Activated CD8-positive, alpha-beta T cell treated with anti-CD3 and anti-CD28 coated beads, Interleukin-2, amount 10 ng/mL, durations not matched to agents 7 days and 5 days (primary cell): ENCODE measurements at regions of chr7 and their contacts with region 1.

Region 1: DNA sequence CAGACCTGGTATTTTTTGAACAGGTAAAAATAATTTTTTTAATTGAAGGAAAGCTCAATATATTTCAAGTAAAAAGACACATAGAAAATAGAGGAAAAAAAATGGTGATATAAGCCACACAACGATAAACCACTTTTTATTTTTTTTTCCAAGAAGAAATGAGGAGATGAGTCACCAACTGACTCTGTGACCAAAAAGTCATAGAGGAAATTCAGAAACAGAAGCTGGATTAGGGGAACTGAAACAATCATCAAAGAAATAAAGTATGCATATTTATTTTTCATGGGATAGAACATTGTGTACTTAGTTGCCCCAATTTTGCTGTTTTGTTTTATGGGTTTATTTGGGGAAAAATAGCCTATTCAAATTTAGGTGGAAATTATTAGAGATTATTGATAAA is 176.8 kb upstream of the AGR3 start:
- DNase-seq: no peak
- ATAC-seq: peak; percentile 44
- H3K4me3 Mint-ChIP-seq: no peak overlapping the region
- H3K27ac Mint-ChIP-seq: no peak overlapping the region
- H3K4me1 Mint-ChIP-seq: peaks cover 36% of the 10 kb centered on the region
- H3K27me3 Mint-ChIP-seq: no peaks in the 10 kb centered on the region

Region 2: GRCh38 chr7:17009007-17009719 is 49.4 kb before region 1 on chr7:
- CTCF ChIA-PET with region 1: interaction called, 10 read pairs
- POLR2A ChIA-PET with region 1: no interaction called
- DNase-seq: no peak
- ATAC-seq: no peak
- H3K4me3 Mint-ChIP-seq: no peak overlapping the region
- H3K27ac Mint-ChIP-seq: no peak overlapping the region
- H3K4me1 Mint-ChIP-seq: peaks cover 35% of the 10 kb centered on the region
- H3K27me3 Mint-ChIP-seq: no peaks in the 10 kb centered on the region

Region 3: DNA sequence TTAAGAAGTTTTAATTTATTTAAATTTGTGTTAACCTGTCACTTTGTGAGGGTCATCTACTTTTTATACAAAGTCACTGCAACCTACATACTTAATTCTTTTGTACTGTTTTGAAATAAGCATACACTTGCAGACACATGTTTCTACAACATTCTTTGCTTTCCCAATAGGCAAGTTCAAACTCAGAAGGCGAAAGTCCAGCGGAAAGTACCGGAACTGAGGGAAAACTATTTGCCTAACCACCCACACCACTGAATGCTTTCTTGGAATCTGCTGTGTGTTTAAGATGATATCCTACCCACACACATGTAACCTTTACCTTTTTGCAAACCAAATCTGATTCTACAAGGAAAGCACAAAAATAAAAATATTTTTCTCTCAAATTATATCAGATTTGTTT is 37.4 kb before region 1 on chr7:
- CTCF ChIA-PET with region 1: no interaction called
- POLR2A ChIA-PET with region 1: no interaction called
- DNase-seq: no peak
- ATAC-seq: no peak
- H3K4me3 Mint-ChIP-seq: no peak overlapping the region
- H3K27ac Mint-ChIP-seq: no peak overlapping the region
- H3K4me1 Mint-ChIP-seq: peaks cover 5% of the 10 kb centered on the region
- H3K27me3 Mint-ChIP-seq: peaks cover 6% of the 10 kb centered on the region

Region 4: GRCh38 chr7:17120756-17121155 is 62.2 kb after region 1 on chr7:
- CTCF ChIA-PET with region 1: no interaction called
- POLR2A ChIA-PET with region 1: no interaction called
- DNase-seq: no peak
- ATAC-seq: no peak
- H3K4me3 Mint-ChIP-seq: no peak overlapping the region
- H3K27ac Mint-ChIP-seq: no peak overlapping the region
- H3K4me1 Mint-ChIP-seq: peaks cover 12% of the 10 kb centered on the region
- H3K27me3 Mint-ChIP-seq: no peaks in the 10 kb centered on the region